ENCODE measurements at regions of chr11 and their contacts with region 1.

Region 1: GRCh38 chr11:74570266-74571061 is 21.9 kb upstream of the POLD3 start:
- DNase-seq: peak in 1 of 2 donors; percentile 56
- ATAC-seq: peak in 1 of 3 donors; percentile 44
- H3K4me3 ChIP-seq: no peak overlapping the region
- H3K4me3 Mint-ChIP-seq: no peak overlapping the region
- H3K27ac ChIP-seq: no peak overlapping the region
- H3K27ac Mint-ChIP-seq: no peak overlapping the region
- H3K4me1 ChIP-seq: no peaks in the 10 kb centered on the region
- H3K4me1 Mint-ChIP-seq: no peaks in the 10 kb centered on the region
- H3K27me3 ChIP-seq: no peaks in the 10 kb centered on the region
- H3K27me3 Mint-ChIP-seq: peaks cover 0 to 6% of the 10 kb centered on the region in 2 donors
- CTCF ChIP-seq: peak; percentile 21

Region 2: GRCh38 chr11:74388678-74389327 is 181.7 kb before region 1 on chr11:
- intact Hi-C with region 1: loop called (anchors 5 kb)
- DNase-seq: peak in 1 of 2 donors; percentile 84
- ATAC-seq: peak; percentile 88 to 89 (median 89)
- H3K4me3 ChIP-seq: no peak overlapping the region
- H3K4me3 Mint-ChIP-seq: no peak overlapping the region
- H3K27ac ChIP-seq: no peak overlapping the region
- H3K27ac Mint-ChIP-seq: no peak overlapping the region
- H3K4me1 ChIP-seq: no peaks in the 10 kb centered on the region
- H3K4me1 Mint-ChIP-seq: no peaks in the 10 kb centered on the region
- H3K27me3 ChIP-seq: no peaks in the 10 kb centered on the region
- H3K27me3 Mint-ChIP-seq: no peaks in the 10 kb centered on the region
- CTCF ChIP-seq: peak; percentile 82

Region 3: GRCh38 chr11:74400606-74401005 is 169.9 kb before region 1 on chr11:
- intact Hi-C with region 1: no loop called
- DNase-seq: no peak
- ATAC-seq: no peak
- H3K4me3 ChIP-seq: no peak overlapping the region
- H3K4me3 Mint-ChIP-seq: no peak overlapping the region
- H3K27ac ChIP-seq: no peak overlapping the region
- H3K27ac Mint-ChIP-seq: no peak overlapping the region
- H3K4me1 ChIP-seq: peaks cover 8% of the 10 kb centered on the region
- H3K4me1 Mint-ChIP-seq: peaks cover 14 to 18% of the 10 kb centered on the region in 2 donors
- H3K27me3 ChIP-seq: no peaks in the 10 kb centered on the region
- H3K27me3 Mint-ChIP-seq: peaks cover 3 to 5% of the 10 kb centered on the region in 2 donors
- CTCF ChIP-seq: no peak

Region 4: GRCh38 chr11:74520927-74521665 is 49.4 kb before region 1 on chr11:
- intact Hi-C with region 1: no loop called
- DNase-seq: no peak
- ATAC-seq: no peak
- H3K4me3 ChIP-seq: no peak overlapping the region
- H3K4me3 Mint-ChIP-seq: no peak overlapping the region
- H3K27ac ChIP-seq: no peak overlapping the region
- H3K27ac Mint-ChIP-seq: no peak overlapping the region
- H3K4me1 ChIP-seq: no peaks in the 10 kb centered on the region
- H3K4me1 Mint-ChIP-seq: no peaks in the 10 kb centered on the region
- H3K27me3 ChIP-seq: peaks cover 2% of the 10 kb centered on the region
- H3K27me3 Mint-ChIP-seq: peaks cover 16 to 30% of the 10 kb centered on the region in 2 donors
- CTCF ChIP-seq: no peak

Region 5: GRCh38 chr11:74581954-74582547 is 11.6 kb after region 1 on chr11:
- intact Hi-C with region 1: no loop called
- DNase-seq: no peak
- ATAC-seq: no peak
- H3K4me3 ChIP-seq: no peak overlapping the region
- H3K4me3 Mint-ChIP-seq: no peak overlapping the region
- H3K27ac ChIP-seq: no peak overlapping the region
- H3K27ac Mint-ChIP-seq: no peak overlapping the region
- H3K4me1 ChIP-seq: no peaks in the 10 kb centered on the region
- H3K4me1 Mint-ChIP-seq: no peaks in the 10 kb centered on the region
- H3K27me3 ChIP-seq: no peaks in the 10 kb centered on the region
- H3K27me3 Mint-ChIP-seq: no peaks in the 10 kb centered on the region
- CTCF ChIP-seq: no peak

Region 6: DNA sequence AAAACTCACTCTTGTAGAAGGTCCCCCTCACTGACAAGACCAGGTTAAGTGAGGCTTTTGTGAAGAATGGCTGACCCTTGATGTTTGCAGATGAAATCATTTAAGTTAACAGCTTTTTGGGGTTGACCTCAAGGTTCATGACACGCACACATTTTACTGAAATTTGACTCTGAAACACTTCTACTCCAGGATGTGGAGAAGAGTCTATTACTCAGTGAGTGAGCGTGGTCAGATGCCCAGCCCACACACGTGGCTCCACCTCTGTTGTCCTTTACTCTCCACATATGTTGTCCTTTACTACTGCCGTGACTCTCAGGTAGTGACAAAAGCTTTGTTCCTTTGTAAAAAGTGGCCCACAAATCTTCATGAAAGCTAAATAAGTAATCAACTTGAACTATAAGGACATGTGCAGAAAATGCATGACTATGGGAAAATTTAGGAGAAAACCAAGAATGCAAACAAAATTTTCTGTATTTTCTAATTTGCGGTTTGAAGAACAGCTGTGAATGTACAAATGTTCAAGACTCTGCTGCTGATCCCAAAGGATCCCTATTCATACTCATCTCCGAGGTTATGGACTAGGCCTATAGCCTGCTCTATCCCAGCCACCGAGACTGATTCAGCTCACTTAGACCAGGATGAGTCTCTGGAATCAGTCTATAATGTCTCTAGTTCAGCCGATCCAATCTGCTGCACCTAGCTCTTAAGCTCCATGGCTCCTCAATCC is 356.0 kb after region 1 on chr11:
- intact Hi-C with region 1: no loop called
- DNase-seq: no peak
- ATAC-seq: no peak
- H3K4me3 ChIP-seq: no peak overlapping the region
- H3K4me3 Mint-ChIP-seq: no peak overlapping the region
- H3K27ac ChIP-seq: no peak overlapping the region
- H3K27ac Mint-ChIP-seq: no peak overlapping the region
- H3K4me1 ChIP-seq: no peaks in the 10 kb centered on the region
- H3K4me1 Mint-ChIP-seq: no peaks in the 10 kb centered on the region
- H3K27me3 ChIP-seq: no peaks in the 10 kb centered on the region
- H3K27me3 Mint-ChIP-seq: no peaks in the 10 kb centered on the region
- CTCF ChIP-seq: no peak

Measured in natural killer cell (primary cell).